ENCODE measurements at regions of chr13 and their contacts with region 1.

Region 1: DNA sequence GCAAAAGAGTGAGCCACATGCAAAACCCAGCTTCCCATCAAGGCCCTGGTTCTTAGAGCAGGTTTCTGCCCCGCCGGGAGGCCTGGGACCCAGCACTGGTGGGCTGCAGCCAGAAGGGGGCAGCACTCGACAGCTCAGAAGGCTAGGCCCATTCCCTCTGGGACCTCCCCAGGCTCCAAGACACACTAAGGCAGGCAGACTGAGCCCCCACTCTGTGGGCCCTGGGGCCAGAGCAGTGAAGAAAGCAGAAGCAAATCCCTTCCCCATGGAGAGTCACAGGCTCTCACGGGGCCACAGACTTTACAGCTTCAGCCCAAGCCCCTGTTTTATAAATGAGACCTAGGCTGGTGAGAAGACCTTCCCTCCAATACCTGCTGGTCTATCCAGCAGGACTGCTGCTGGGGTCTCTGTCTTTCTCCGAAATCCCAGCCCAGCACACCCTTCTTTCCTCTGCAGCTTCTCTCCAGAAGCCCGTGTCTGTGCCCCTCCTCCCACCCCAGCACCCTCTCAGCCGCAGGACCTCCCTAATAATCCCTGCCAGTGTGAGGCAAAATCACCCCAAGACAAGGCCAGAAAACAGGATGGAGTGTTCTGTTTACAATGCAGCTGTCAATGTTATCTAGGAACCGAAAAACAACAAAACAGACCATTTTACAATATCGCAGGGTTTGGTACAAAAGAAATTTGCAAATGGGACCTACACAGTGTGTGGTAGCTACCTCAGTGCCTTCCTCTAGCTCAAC is 109.3 kb downstream of the ABCC4 start:
- DNase-seq: peak; percentile 86
- ATAC-seq: peak; percentile 92

Region 2: GRCh38 chr13:94967183-94968039 is 224.6 kb before region 1 on chr13:
- intact Hi-C with region 1: no loop called
- DNase-seq: peak; percentile 20
- ATAC-seq: peak; percentile 53

Region 3: DNA sequence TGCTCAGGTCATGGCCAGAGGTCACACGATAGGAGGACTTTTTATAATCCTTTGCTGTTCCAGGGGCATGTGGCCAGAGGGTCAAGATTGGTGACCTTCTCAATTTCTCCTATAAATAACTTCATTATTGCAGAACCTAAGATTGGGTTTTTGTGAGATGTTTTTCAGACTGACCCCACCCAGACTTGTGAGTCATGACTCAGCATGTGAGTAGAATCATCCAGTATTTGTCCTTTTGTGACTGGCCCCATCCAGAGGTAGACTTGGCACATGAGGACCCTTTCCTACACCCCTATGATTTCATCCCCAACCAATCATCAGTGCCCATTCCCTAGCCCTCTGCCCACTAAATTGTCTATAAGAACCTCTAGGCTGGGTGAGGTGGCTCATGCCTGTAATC is 193.8 kb after region 1 on chr13:
- intact Hi-C with region 1: loop called (anchors 2 kb)
- DNase-seq: no peak
- ATAC-seq: no peak